Right ventricle myocardium inferior (tissue), 1 donor: ENCODE measurements at regions of chr17 and their contacts with region 1.

Region 1: DNA sequence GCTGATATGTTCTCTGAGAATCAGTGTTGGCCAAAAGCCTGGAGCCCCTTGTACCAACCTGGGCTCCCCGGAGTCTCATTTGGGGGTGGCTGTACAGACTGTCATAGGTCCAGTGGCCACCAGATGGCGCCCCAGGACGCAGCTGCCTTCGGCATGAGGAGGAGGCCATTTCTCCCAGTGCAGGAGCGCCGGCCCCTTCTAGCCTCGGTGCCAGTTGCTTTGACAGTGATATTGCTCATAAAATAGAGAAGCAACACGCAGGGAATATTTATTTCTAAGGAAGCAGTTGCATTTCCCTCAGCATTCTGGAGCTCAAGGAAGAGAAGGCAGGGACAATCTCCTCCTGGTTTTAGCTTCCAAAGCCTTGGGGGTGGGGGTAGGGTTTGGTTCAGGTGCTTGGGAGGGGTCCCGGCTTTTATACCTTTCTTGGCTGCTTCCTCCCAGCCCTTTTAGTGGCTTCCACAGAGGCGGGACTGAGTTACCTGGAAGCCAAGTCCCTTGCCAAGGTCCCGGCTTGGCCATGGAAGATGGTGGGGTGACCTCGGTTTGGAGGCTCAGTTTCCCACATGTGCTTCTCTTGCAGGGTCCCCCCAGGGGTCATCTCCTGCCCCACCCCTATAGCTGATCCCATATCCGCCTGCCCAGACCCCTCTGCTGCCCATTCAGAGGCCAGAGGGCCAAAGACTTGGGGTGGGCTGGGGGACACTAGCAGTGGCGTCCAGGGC is 117.8 kb upstream of the CDC42EP4 start:
- DNase-seq: peak; percentile 92
- ATAC-seq: peak; percentile 91

Region 2: GRCh38 chr17:73203135-73203787 is 226.3 kb before region 1 on chr17:
- intact Hi-C with region 1: no loop called
- DNase-seq: no peak
- ATAC-seq: peak; percentile 71

Region 3: DNA sequence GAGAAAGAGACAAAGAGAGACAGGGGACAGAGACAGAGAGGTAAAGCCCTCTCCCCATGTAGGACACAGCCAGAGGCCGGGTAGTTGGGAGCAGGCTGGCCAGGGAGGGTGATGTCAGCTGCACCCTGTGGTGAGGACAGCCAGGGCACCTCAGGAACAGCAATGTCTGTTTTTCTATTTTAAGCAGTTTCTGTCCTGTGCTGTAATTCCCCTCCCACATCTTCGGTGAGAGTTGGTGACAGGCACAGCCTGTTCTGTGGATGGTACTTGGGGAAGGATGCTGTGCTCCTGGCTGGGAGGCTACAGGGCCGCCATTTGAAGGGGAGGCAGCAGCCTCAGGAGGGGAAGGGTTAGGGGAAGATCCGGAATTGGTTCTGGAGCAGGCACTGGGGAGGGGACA is 51.1 kb after region 1 on chr17:
- intact Hi-C with region 1: loop called (anchors 5 kb)
- DNase-seq: no peak
- ATAC-seq: peak; percentile 89

Region 4: DNA sequence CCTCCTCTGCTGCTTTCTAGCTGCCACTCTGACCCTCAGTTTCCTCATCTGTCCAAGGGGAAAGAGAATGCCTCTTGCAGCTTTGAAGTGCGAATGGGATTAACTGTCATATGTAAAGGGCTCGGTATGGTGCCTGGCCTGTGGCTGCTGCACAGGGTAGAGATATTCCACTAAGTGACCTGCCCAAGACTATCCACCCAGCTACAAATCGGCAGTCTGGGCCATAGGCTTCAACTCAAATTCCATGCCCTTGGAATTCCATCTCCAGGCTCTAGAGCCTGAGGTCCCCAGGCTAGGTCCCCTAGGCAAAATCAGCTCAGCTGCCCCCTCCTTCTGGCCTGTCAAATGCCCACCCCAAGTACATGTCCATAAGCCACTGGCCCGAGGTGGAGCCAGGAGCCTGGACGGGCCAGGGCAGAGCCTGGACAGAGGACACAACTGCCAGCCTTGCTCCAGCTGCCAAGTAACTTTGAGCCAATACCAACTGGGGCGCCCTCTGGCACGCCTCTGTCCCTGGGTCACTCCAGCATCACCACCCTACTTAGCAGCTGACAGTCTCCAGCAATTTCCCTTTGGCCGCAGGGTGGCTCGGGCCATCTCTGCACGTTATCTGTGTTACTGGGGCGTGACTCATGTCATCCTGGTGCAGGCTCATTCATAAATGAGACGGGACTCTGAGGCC is 157.5 kb after region 1 on chr17:
- intact Hi-C with region 1: loop called (anchors 2 kb)
- DNase-seq: peak; percentile 64
- ATAC-seq: peak; percentile 88

Region 5: DNA sequence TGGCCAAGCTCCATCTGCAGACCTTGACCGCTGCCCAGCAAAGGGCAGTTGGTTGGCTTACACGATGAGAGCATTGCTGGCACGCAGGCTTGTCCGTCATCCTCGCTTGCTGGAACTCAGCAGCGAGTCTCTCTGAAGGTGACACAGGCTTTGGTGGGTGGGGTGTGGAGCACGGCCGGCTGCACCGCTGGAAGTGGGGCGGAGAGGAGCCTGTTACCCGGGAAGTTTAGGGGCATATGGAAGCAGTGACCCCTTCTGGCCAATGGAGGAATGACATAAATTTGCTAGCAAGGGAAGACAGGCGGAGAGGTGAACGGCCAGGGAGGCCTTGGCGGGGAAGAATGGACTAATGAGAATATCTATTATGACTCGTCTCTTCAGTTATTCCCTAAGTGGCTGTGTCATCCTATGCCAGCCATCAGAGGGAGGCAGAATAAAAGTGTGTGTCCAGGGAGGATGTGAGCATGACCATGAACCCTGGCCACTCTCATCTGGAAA is 280.5 kb after region 1 on chr17:
- intact Hi-C with region 1: loop called (anchors 1 kb)
- DNase-seq: peak; percentile 73
- ATAC-seq: peak; percentile 88

Region 6: GRCh38 chr17:74176546-74177001 is 747.0 kb after region 1 on chr17:
- intact Hi-C with region 1: loop called (anchors 2 kb)
- DNase-seq: peak; percentile 78
- ATAC-seq: peak; percentile 77